K562 (cell line): ENCODE measurements at regions of chr4 and their contacts with region 1.

Region 1: GRCh38 chr4:102255454-102255853 is 89.8 kb downstream of the SLC39A8 start:
- DNase-seq: no peak
- ATAC-seq: no peak
- H3K4me3 ChIP-seq: no peak overlapping the region
- H3K27ac ChIP-seq: no peak overlapping the region
- H3K4me1 ChIP-seq: no peaks in the 10 kb centered on the region; a peak in 1 of 5 replicates
- H3K27me3 ChIP-seq: no peaks in the 10 kb centered on the region
- CTCF ChIP-seq: no peak
- EP300 ChIP-seq: no peak
- POLR2A ChIP-seq: no peak
- RAD21 ChIP-seq: no peak

Region 2: DNA sequence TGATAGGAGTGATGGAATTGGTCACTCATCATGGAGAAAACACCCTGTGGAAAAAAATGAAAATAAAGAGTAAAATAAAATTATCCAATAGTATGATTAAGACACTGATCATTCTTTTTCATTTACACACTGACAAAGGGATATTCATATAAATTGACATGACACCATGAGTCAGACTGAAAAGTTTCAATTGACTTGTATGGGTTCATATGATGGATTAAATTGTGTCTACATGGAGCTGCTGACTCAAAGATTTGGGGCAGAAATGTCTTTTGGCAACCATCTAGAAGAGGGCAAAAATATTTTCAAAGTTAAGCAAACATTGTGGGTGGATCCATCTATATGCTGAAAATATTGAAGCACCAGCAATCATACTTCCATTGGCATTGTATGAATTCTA is 754.7 kb before region 1 on chr4:
- CTCF ChIA-PET with region 1: no interaction called
- POLR2A ChIA-PET with region 1: no interaction called
- in situ Hi-C with region 1: no loop called
- intact Hi-C with region 1: no loop called
- DNase-seq: no peak
- ATAC-seq: no peak
- H3K4me3 ChIP-seq: no peak overlapping the region
- H3K27ac ChIP-seq: no peak overlapping the region
- H3K4me1 ChIP-seq: no peaks in the 10 kb centered on the region
- H3K27me3 ChIP-seq: no peaks in the 10 kb centered on the region
- CTCF ChIP-seq: no peak
- EP300 ChIP-seq: no peak
- POLR2A ChIP-seq: no peak
- RAD21 ChIP-seq: no peak

Region 3: DNA sequence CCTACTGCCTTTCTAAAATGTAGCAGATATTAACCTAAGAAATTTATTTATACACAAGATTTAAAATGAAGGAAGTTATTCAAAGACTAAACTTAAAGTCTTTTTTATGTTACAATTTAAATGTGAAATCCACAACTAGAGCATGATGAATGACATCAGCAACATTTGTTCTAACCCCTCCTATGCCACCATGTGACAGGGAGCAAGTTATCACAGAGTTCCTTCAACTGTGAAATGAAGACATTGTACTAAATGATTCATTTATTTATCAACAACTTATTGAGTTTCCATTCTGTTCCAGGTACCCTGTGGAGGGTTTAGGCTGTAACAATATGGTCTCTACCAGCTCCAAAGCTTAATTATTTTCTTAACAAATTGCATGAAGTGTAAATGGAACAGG is 12.9 kb after region 1 on chr4:
- CTCF ChIA-PET with region 1: no interaction called
- POLR2A ChIA-PET with region 1: no interaction called
- in situ Hi-C with region 1: no loop called
- intact Hi-C with region 1: no loop called
- DNase-seq: no peak
- ATAC-seq: no peak
- H3K4me3 ChIP-seq: no peak overlapping the region
- H3K27ac ChIP-seq: no peak overlapping the region
- H3K4me1 ChIP-seq: no peaks in the 10 kb centered on the region
- H3K27me3 ChIP-seq: no peaks in the 10 kb centered on the region
- CTCF ChIP-seq: no peak
- EP300 ChIP-seq: no peak
- POLR2A ChIP-seq: no peak
- RAD21 ChIP-seq: no peak

Region 4: GRCh38 chr4:102299354-102300107 is 44.1 kb after region 1 on chr4:
- CTCF ChIA-PET with region 1: no interaction called
- POLR2A ChIA-PET with region 1: no interaction called
- in situ Hi-C with region 1: no loop called
- intact Hi-C with region 1: loop called (anchors 1 kb)
- DNase-seq: peak; percentile 59 to 79 (median 69)
- ATAC-seq: peak; percentile 100
- H3K4me3 ChIP-seq: no peak overlapping the region
- H3K27ac ChIP-seq: no peak overlapping the region
- H3K4me1 ChIP-seq: peaks cover 0 to 2% of the 10 kb centered on the region in 2 experiments; a peak in 3 of 5 replicates
- H3K27me3 ChIP-seq: no peaks in the 10 kb centered on the region
- CTCF ChIP-seq: peak; percentile 67 to 83 (median 75)
- EP300 ChIP-seq: no peak
- POLR2A ChIP-seq: no peak
- RAD21 ChIP-seq: peak; percentile 31 to 46

Region 5: GRCh38 chr4:102430461-102430910 is 175.0 kb after region 1 on chr4:
- CTCF ChIA-PET with region 1: interaction called, 6 read pairs
- POLR2A ChIA-PET with region 1: no interaction called
- in situ Hi-C with region 1: no loop called
- intact Hi-C with region 1: loop called (anchors 1 kb)
- DNase-seq: peak in 2 of 4 experiments; percentile 10 to 25
- ATAC-seq: peak; percentile 56
- H3K4me3 ChIP-seq: peak overlapping the region; percentile 49
- H3K27ac ChIP-seq: peak overlapping the region; percentile 71; the same call in 2 of the 3 replicates
- H3K4me1 ChIP-seq: no peaks in the 10 kb centered on the region; a peak in 1 of 5 replicates
- H3K27me3 ChIP-seq: no peaks in the 10 kb centered on the region
- CTCF ChIP-seq: no peak
- EP300 ChIP-seq: no peak
- POLR2A ChIP-seq: no peak
- RAD21 ChIP-seq: no peak